ENCODE measurements at regions of chr14 and their contacts with region 1.

Region 1: DNA sequence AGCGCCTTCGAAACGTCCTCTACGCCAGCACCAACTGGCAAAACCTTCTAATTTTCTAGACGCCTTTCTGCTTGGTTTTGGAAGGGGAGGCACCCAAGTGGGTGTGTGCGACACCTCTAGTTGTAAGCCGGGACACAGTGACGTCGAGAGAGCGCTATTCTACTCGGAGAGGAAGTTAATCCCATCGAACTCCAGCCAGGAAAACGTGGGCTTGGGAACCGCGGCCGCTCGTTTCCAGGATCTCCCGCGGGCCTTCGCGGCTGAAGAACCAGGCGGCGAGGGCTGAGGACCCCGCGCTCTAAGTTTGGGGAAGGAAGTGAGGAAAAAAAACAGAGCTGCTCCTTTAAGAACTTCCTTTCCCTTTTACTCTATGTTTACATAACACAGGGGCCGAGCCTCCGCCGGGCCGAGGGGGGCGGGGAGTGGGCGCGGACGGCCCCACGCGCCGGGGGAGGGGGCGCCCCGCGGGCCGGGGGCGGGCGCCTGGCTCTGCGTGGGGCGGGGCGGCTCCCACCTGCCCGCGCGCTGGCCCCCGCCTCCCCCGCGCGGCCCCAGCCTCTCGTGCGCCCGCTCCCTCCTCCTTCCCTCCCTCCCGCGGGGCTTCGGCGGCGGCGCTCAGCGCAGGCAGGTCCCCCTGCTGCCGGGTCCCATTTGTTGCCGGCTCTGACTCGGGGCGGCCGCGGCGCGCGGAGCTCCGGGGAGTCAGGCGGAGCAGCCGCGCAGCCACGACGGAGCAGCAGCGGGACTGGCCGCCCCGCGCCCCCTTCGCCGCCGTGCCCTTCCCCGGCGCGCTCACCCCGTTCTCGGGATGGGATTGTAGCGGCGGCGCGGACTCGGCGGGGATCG is at the start of gene PELI2:
- DNase-seq: peak; percentile 77 to 91 (median 88)
- ATAC-seq: peak; percentile 90
- H3K4me3 ChIP-seq: peak within 1 kb of the TSS; percentile 83
- H3K4me3 Mint-ChIP-seq: peak within 1 kb of the TSS; percentile 84 to 97 (median 94)
- H3K27ac ChIP-seq: peak within 1 kb of the TSS; percentile 83
- H3K27ac Mint-ChIP-seq: peak within 1 kb of the TSS; percentile 82 to 99 (median 98)
- H3K4me1 ChIP-seq: peaks cover 14 to 32% of the 10 kb centered on the region in 2 donors
- H3K4me1 Mint-ChIP-seq: peaks cover 29 to 64% (median 57%) of the 10 kb centered on the region in 7 donors
- H3K27me3 ChIP-seq: peaks cover 0 to 4% of the 10 kb centered on the region in 2 donors
- H3K27me3 Mint-ChIP-seq: peaks cover 0 to 59% (median 0%) of the 10 kb centered on the region in 5 donors
- total RNA-seq, gene PELI2: 6.2 to 24.7 (median 11.5) TPM

Region 2: DNA sequence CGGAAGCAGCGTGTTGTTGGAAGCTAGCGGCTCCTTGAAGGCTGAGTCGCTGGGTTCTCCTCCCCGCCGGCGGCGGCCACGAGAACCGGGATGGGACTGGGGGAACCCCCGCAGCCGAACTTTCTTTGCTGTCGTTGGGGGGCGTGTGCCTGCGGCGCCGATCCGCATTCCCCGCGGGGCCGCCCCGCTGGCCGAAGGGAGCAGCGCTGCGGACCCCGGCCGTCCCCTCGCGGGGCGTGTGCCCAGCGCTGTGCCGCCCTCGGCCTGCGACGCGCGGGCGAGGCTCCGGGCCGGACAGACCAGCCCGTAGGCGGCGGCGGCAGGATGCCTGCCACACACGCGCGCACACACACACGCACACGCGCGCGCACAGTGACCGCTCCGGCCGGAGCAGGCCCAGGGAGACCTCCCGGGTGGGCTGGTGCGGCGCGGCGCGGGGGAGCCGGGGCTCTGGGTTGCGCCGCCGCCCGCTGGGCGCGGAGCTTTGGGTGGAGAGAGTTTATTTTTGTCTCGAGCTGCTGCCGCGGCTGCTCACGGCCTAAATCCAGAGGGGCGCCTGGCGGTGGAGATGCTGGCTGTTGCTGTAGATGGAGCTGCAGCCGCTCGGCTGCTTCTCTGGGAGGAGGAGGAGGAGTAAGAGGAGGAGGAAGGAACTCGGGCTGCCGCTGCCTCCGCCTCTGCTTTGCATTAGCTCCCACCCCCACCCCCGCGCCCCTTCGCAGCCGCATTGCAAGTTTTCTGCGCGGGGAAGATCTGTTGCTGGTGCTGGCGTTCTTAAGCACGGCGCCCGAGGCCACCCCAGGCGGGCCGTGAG is 1551.4 kb before region 1 on chr14 and contains the start of gene SAMD4A:
- CTCF ChIA-PET with region 1: no interaction called
- POLR2A ChIA-PET with region 1: no interaction called
- intact Hi-C with region 1: loop called in 1 of 2 experiments (anchors 2 kb)
- DNase-seq: peak; percentile 32 to 68 (median 53)
- ATAC-seq: peak; percentile 46
- H3K4me3 ChIP-seq: peak within 1 kb of the TSS; percentile 74
- H3K4me3 Mint-ChIP-seq: peak within 1 kb of the TSS; percentile 91 to 97 (median 94)
- H3K27ac ChIP-seq: peak within 1 kb of the TSS; percentile 56
- H3K27ac Mint-ChIP-seq: peak within 1 kb of the TSS in 8 of 9 donors; percentile 28 to 92 (median 66)
- H3K4me1 ChIP-seq: peaks cover 9 to 11% of the 10 kb centered on the region in 2 donors
- H3K4me1 Mint-ChIP-seq: peaks cover 5 to 19% (median 14%) of the 10 kb centered on the region in 7 donors
- H3K27me3 ChIP-seq: peaks cover 0 to 12% of the 10 kb centered on the region in 2 donors
- H3K27me3 Mint-ChIP-seq: peaks cover 0 to 51% (median 6%) of the 10 kb centered on the region in 5 donors
- total RNA-seq, gene SAMD4A: 0.73 to 5.7 (median 1.7) TPM

Region 3: DNA sequence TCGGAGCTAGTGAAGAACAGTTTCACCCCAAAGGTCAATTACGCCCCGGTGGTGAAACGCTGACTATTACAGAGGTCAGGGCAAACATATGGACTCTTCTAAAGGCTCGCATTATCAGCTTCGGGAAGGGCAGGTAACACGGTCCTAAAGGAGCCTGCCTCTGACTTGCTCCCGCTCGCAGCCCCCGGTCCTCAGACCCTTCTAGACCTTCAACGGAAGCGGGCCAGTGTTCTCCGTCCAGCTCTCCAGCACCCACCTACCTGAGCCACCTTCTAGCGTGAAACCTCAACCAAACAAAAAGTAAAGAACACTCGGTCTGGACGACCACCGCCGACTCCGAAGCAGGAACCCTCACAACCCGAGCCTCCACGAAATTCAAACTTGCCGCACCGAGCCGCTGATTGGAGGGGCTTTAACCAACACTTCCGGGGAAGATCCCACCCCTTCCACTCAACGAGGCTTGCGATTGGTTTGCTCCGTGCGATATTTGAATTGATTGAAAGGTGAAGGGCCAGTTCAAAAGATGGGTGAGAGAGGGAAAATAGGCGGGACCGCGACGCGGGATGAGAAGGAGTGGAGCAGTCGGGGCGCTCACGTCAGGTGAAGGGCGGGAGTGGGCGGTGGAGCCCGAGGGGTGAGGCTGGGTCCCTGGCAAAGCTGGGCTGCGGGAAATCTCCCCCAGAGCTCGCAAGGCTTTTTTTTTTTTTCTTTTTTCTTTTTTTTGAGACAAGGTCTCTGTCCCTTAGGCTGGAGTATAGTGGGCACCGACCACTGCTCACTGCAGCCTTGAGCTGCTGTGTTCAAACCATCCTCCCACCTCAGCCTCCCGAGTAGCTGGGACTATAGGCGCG is 926.6 kb before region 1 on chr14 and contains the start of gene DLGAP5:
- CTCF ChIA-PET with region 1: no interaction called
- POLR2A ChIA-PET with region 1: no interaction called
- intact Hi-C with region 1: loop called in 1 of 2 experiments (anchors 1 kb)
- DNase-seq: peak; percentile 59 to 90 (median 86)
- ATAC-seq: peak; percentile 98
- H3K4me3 ChIP-seq: peak within 1 kb of the TSS; percentile 84
- H3K4me3 Mint-ChIP-seq: peak within 1 kb of the TSS; percentile 88 to 97 (median 90)
- H3K27ac ChIP-seq: peak within 1 kb of the TSS; percentile 58
- H3K27ac Mint-ChIP-seq: peak within 1 kb of the TSS; percentile 46 to 92 (median 68)
- H3K4me1 ChIP-seq: peaks cover 7 to 10% of the 10 kb centered on the region in 2 donors
- H3K4me1 Mint-ChIP-seq: peaks cover 5 to 42% (median 18%) of the 10 kb centered on the region in 7 donors
- H3K27me3 ChIP-seq: no peaks in the 10 kb centered on the region
- H3K27me3 Mint-ChIP-seq: peaks cover 0 to 4% (median 0%) of the 10 kb centered on the region in 5 donors
- total RNA-seq, gene DLGAP5: 0.49 to 46.7 TPM in 2 of 5 experiments, not detected in the others

Region 4: GRCh38 chr14:55707365-55707804 is 410.6 kb before region 1 on chr14:
- CTCF ChIA-PET with region 1: no interaction called
- POLR2A ChIA-PET with region 1: no interaction called
- intact Hi-C with region 1: loop called in 1 of 2 experiments (anchors 5 kb)
- DNase-seq: peak in 4 of 9 donors; percentile 2 to 31 (median 17)
- ATAC-seq: no peak
- H3K4me3 ChIP-seq: no peak overlapping the region
- H3K4me3 Mint-ChIP-seq: no peak overlapping the region
- H3K27ac ChIP-seq: no peak overlapping the region
- H3K27ac Mint-ChIP-seq: no peak overlapping the region
- H3K4me1 ChIP-seq: no peaks in the 10 kb centered on the region
- H3K4me1 Mint-ChIP-seq: no peaks in the 10 kb centered on the region
- H3K27me3 ChIP-seq: no peaks in the 10 kb centered on the region
- H3K27me3 Mint-ChIP-seq: peaks cover 0 to 2% (median 0%) of the 10 kb centered on the region in 5 donors

Region 5: DNA sequence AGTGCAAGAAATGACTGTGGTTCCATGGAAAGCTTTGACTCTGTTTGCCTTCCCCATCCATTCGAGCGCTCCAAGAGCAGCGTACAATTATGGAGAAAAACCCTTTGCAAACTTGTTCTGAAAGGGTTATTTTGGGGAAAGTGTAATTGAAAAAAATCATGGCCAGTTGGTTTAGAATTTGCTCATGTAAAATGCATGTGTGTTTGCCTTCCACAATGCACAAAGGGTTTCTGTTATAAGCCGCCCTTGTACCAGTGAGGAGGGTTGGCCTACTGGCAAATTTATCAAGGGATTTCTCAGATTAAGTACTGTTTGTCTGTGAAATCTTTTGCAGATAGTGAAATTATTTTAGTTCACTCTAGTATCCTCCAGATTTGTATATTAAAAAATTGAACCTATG is 62.5 kb before region 1 on chr14:
- CTCF ChIA-PET with region 1: no interaction called
- POLR2A ChIA-PET with region 1: no interaction called
- intact Hi-C with region 1: no loop called
- DNase-seq: no peak
- ATAC-seq: no peak
- H3K4me3 ChIP-seq: no peak overlapping the region
- H3K4me3 Mint-ChIP-seq: no peak overlapping the region
- H3K27ac ChIP-seq: no peak overlapping the region
- H3K27ac Mint-ChIP-seq: no peak overlapping the region
- H3K4me1 ChIP-seq: no peaks in the 10 kb centered on the region
- H3K4me1 Mint-ChIP-seq: no peaks in the 10 kb centered on the region
- H3K27me3 ChIP-seq: no peaks in the 10 kb centered on the region
- H3K27me3 Mint-ChIP-seq: peaks cover 21 to 41% (median 25%) of the 10 kb centered on the region in 5 donors

Region 6: GRCh38 chr14:56081139-56081538 is 36.8 kb before region 1 on chr14:
- CTCF ChIA-PET with region 1: no interaction called
- POLR2A ChIA-PET with region 1: no interaction called
- intact Hi-C with region 1: loop called in 1 of 2 experiments (anchors 5 kb)
- DNase-seq: no peak
- ATAC-seq: no peak
- H3K4me3 ChIP-seq: no peak overlapping the region
- H3K4me3 Mint-ChIP-seq: no peak overlapping the region
- H3K27ac ChIP-seq: no peak overlapping the region
- H3K27ac Mint-ChIP-seq: no peak overlapping the region
- H3K4me1 ChIP-seq: no peaks in the 10 kb centered on the region
- H3K4me1 Mint-ChIP-seq: no peaks in the 10 kb centered on the region
- H3K27me3 ChIP-seq: no peaks in the 10 kb centered on the region
- H3K27me3 Mint-ChIP-seq: peaks cover 12 to 48% (median 36%) of the 10 kb centered on the region in 5 donors

Region 7: DNA sequence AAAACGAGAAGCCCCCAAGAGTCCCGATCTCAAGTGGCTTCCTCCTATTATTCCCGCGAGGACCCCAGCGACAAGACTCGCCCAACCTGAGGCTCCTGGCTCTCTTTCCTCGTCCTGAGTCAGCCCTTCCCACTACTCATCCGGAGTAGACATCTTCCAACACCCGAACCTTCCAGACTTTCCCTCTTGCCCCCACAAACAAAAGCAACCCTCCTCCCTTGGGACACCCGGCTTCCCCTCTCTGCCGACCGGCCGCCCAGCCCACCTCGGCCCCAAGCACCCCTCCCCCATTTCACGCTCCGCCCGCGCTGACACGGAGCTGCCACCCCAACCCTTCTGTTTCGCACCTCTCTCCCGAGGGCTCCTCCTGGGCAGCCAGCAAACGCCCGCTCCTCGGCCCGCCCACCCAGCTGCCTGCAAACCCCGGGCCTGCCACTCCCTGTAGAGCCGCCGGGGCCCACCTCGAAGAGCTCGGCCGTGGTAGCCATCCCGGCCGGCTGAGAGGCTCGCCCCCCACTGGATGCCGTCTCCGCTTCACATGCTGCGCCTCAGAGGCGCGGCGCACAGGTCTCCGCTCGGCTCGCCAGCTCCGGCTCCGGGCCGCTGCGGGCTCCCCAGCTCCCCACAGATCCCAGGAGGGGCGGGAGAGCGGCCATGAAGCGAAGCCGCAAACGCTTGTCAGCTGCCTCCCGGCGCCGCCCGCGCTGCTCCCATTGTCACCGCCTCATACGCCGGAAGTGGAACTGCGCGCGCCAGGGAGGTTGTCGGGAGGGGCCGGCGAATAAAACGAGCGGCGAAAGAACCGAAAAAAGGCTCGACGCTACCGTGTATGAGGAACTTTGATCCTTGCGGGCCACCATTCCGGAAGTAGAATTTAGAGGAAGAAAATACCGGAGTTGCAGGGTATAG is 1150.4 kb after region 1 on chr14 and contains the starts of genes AP5M1 and EXOC5:
- CTCF ChIA-PET with region 1: no interaction called
- POLR2A ChIA-PET with region 1: interaction called, 3 read pairs
- intact Hi-C with region 1: loop called in 1 of 2 experiments (anchors 1 kb)
- DNase-seq: peak; percentile 78 to 95 (median 93)
- ATAC-seq: peak; percentile 89
- H3K4me3 ChIP-seq: peak within 1 kb of the TSS; percentile 89
- H3K4me3 Mint-ChIP-seq: peak within 1 kb of the TSS; percentile 97 to 100 (median 99)
- H3K27ac ChIP-seq: peak within 1 kb of the TSS; percentile 91
- H3K27ac Mint-ChIP-seq: peak within 1 kb of the TSS; percentile 98 to 100 (median 99)
- H3K4me1 ChIP-seq: peaks cover 29 to 34% of the 10 kb centered on the region in 2 donors
- H3K4me1 Mint-ChIP-seq: peaks cover 41 to 93% (median 76%) of the 10 kb centered on the region in 7 donors
- H3K27me3 ChIP-seq: no peaks in the 10 kb centered on the region
- H3K27me3 Mint-ChIP-seq: no peaks in the 10 kb centered on the region
- total RNA-seq, gene AP5M1: 42.3 to 62.8 (median 52.1) TPM
- total RNA-seq, gene EXOC5: 27.3 to 71.6 (median 42.2) TPM

Measured in naive thymus-derived CD4-positive, alpha-beta T cell (primary cell).